ENCODE measurements at regions of chr22 and their contacts with region 1.

Region 1: DNA sequence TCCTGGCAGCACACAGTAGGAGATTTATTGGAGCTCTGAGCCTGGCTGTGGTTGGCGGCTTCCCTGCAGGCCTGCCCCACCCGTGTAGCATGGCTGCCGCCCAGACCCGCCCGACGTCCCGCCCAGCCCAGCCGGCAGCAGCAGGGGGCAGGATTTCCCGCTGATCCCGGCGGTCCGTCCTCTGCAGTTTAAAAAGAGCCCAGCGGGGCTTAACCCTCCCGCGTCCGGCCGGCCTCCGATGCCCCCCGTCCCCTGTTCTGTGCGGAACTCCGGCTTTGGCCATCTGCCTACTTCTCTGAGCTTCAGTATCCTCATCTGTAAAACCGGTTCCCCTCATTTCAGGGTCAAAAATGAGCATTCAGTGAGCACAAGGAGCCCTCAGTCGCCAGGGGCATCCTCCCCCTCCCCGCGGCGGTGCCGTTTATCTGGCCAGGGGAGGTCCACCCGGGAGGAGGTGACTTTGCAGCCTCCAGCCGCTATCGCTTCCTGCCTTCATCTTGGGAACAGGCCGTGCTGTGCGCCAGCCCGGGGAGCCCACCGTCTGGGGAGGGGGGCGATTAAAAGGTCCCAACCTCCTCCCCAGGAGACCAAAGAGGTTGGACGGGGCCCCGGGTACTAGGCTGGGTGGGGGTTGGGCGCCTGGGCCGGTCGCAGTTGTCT is at the start of gene GAS2L1:
- DNase-seq: peak; percentile 89 to 96 (median 95)
- ATAC-seq: peak; percentile 73 to 79
- H3K4me3 ChIP-seq: peak within 1 kb of the TSS; percentile 91
- H3K27ac ChIP-seq: peak within 1 kb of the TSS; percentile 84
- H3K4me1 ChIP-seq: peaks cover 19% of the 10 kb centered on the region
- H3K27me3 ChIP-seq: no peaks in the 10 kb centered on the region
- total RNA-seq, gene GAS2L1: 17.1 to 25.7 (median 22.6) TPM

Region 2: DNA sequence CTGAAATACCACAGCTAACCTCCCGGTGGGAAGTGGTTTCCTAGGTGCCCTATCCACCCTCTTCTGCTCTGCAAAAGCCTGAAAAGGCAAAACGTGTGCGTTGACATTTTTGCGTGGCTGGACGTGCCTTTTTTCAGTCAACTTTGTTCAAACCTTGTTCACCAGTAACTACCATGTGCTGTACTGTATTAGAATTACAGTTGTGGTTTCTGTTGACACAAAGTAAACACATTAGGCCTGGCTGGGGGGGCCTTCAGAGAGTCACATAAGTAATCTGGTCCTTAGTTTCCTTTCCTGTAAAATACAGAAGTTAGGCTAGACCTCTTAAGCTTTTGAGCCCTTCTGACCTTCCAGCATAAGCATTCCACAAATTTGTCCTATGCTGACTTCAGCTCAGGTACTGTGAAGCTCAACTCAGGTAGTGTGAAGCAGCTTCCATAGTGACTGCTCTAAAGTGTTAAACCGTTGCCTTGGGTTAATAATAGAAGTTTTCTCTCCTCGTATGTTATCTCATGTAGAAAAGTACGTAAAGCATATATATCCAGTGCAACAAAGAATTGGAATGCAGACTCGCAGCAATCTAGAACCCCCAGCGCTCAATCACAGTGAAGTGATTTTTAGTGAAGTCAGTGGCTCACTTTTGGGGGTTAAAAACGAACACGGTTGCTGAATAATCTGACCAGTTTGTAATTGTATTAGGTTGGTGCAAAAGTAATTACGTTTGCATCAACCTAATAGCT is 36.4 kb before region 1 on chr22:
- intact Hi-C with region 1: loop called in 1 of 4 experiments (anchors 5 kb)
- DNase-seq: peak in 1 of 3 donors; percentile 41
- ATAC-seq: no peak
- H3K4me3 ChIP-seq: peak overlapping the region; percentile 98
- H3K27ac ChIP-seq: no peak overlapping the region
- H3K4me1 ChIP-seq: peaks cover 9% of the 10 kb centered on the region
- H3K27me3 ChIP-seq: no peaks in the 10 kb centered on the region

Region 3: GRCh38 chr22:29359469-29359868 is 53.2 kb after region 1 on chr22:
- intact Hi-C with region 1: loop called in 1 of 4 experiments (anchors 5 kb)
- DNase-seq: peak; percentile 72 to 88 (median 87)
- ATAC-seq: peak; percentile 84
- H3K4me3 ChIP-seq: no peak overlapping the region
- H3K27ac ChIP-seq: no peak overlapping the region
- H3K4me1 ChIP-seq: peaks cover 3% of the 10 kb centered on the region
- H3K27me3 ChIP-seq: no peaks in the 10 kb centered on the region

Region 4: GRCh38 chr22:29387921-29388758 is 81.8 kb after region 1 on chr22 and contains the start of gene AP1B1:
- intact Hi-C with region 1: no loop called
- DNase-seq: peak; percentile 97 to 98 (median 98)
- ATAC-seq: peak; percentile 97 to 98
- H3K4me3 ChIP-seq: peak within 1 kb of the TSS; percentile 95
- H3K27ac ChIP-seq: peak within 1 kb of the TSS; percentile 89
- H3K4me1 ChIP-seq: no peaks in the 10 kb centered on the region
- H3K27me3 ChIP-seq: no peaks in the 10 kb centered on the region
- total RNA-seq, gene AP1B1: 33.5 to 44.6 (median 40.3) TPM

Measured in right cardiac atrium (tissue), 5 donors.